Heart right ventricle (tissue), 16 donors: ENCODE measurements at regions of chr5 and their contacts with region 1.

Region 1: DNA sequence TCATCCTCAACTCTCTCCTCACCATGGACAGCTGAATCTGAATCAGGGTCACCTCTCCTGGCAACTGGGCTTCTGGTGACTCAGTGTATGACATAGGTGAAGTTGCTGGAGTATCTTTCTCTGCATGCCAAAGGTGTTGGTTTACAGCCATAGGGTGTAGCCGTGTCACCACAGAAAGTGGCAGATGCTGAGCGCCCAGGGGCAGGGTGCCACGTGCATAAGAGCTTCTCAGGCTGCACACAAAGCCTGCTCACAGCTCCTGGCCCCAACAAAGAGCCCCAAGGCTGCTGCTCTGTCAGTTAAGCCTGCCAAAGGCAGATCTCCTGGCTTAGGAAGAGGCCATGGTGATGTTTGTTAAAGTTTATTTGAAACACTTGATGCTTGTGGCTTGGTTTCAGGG is 297.7 kb upstream of the WWC1 start:
- DNase-seq: no peak
- ATAC-seq: peak in 5 of 8 donors; percentile 10 to 60 (median 39)
- H3K4me3 ChIP-seq: no peak overlapping the region
- H3K27ac ChIP-seq: peak overlapping the region in 4 of 10 donors; percentile 10 to 43 (median 29)
- H3K4me1 ChIP-seq: peaks cover 0 to 29% (median 0%) of the 10 kb centered on the region in 9 donors
- H3K27me3 ChIP-seq: no peaks in the 10 kb centered on the region
- CTCF ChIP-seq: no peak

Region 2: GRCh38 chr5:167934551-167934971 is 59.2 kb before region 1 on chr5:
- intact Hi-C with region 1: loop called in 2 of 10 experiments (anchors 5 to 10 kb)
- DNase-seq: peak; percentile 80 to 81
- ATAC-seq: peak; percentile 68 to 96 (median 94)
- H3K4me3 ChIP-seq: peak overlapping the region in 9 of 10 donors; percentile 36 to 61 (median 54)
- H3K27ac ChIP-seq: peak overlapping the region; percentile 51 to 92 (median 82)
- H3K4me1 ChIP-seq: peaks cover 0 to 15% (median 0%) of the 10 kb centered on the region in 9 donors
- H3K27me3 ChIP-seq: no peaks in the 10 kb centered on the region
- CTCF ChIP-seq: no peak

Region 3: GRCh38 chr5:167939686-167940085 is 54.1 kb before region 1 on chr5:
- intact Hi-C with region 1: loop called in 3 of 10 experiments (anchors 2 to 10 kb)
- DNase-seq: no peak
- ATAC-seq: no peak
- H3K4me3 ChIP-seq: peak overlapping the region in 1 of 10 donors; percentile 11
- H3K27ac ChIP-seq: peak overlapping the region in 7 of 10 donors; percentile 5 to 90 (median 51)
- H3K4me1 ChIP-seq: peaks cover 0 to 37% (median 6%) of the 10 kb centered on the region in 9 donors
- H3K27me3 ChIP-seq: no peaks in the 10 kb centered on the region
- CTCF ChIP-seq: no peak